ENCODE measurements at regions of chr9 and their contacts with region 1.

Region 1: GRCh38 chr9:97237951-97238851 is 69.3 kb upstream of the CCDC180 start:
- DNase-seq: peak; percentile 69 to 81 (median 77)
- H3K4me3 ChIP-seq: peak overlapping the region; percentile 14 to 85
- H3K4me3 Mint-ChIP-seq: peak overlapping the region; percentile 92 to 98 (median 97)
- H3K27ac ChIP-seq: peak overlapping the region; percentile 57
- H3K27ac Mint-ChIP-seq: peak overlapping the region; percentile 86 to 96 (median 95)
- H3K4me1 ChIP-seq: peaks cover 11% of the 10 kb centered on the region
- H3K4me1 Mint-ChIP-seq: peaks cover 17 to 40% (median 23%) of the 10 kb centered on the region in 4 donors
- H3K27me3 ChIP-seq: no peaks in the 10 kb centered on the region
- H3K27me3 Mint-ChIP-seq: no peaks in the 10 kb centered on the region

Region 2: DNA sequence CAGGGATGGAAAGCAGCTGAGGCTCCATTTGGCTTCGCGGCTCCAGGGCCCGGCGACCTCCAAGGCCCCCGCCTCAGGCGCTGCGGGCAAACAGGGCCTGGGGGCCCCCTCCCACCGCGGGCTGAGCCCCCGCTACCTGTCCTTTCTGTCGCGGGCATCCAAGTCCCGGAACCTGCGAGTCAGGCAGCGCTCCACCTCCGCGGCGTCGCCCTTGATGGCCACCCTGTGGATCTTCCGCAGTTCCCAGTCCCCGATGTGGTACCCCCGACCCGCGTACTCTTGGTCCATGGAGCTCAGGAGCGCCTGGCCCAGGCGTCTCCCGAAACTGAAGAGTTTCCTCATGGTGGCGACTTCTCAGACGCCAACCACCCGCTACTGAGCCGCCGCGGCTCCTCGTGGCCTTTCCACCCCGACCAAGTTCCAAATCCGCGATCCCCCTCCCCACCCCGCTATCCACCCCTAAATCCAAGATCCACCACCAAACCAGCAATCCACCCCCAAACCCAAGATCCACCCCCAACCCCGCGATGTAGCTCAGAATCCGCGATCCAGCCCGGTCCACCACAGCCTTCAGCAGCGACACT is 17.2 kb before region 1 on chr9:
- CTCF ChIA-PET with region 1: interaction called, 4 read pairs
- POLR2A ChIA-PET with region 1: interaction called, 14 read pairs
- intact Hi-C with region 1: loop called (anchors 1 kb)
- DNase-seq: peak in 1 of 5 donors; percentile 1
- H3K4me3 ChIP-seq: peak overlapping the region in 1 of 2 donors; percentile 28
- H3K4me3 Mint-ChIP-seq: peak overlapping the region; percentile 77 to 88 (median 84)
- H3K27ac ChIP-seq: no peak overlapping the region
- H3K27ac Mint-ChIP-seq: no peak overlapping the region
- H3K4me1 ChIP-seq: peaks cover 6% of the 10 kb centered on the region
- H3K4me1 Mint-ChIP-seq: peaks cover 4 to 10% (median 5%) of the 10 kb centered on the region in 4 donors
- H3K27me3 ChIP-seq: no peaks in the 10 kb centered on the region
- H3K27me3 Mint-ChIP-seq: peaks cover 22 to 32% of the 10 kb centered on the region in 2 donors

Region 3: DNA sequence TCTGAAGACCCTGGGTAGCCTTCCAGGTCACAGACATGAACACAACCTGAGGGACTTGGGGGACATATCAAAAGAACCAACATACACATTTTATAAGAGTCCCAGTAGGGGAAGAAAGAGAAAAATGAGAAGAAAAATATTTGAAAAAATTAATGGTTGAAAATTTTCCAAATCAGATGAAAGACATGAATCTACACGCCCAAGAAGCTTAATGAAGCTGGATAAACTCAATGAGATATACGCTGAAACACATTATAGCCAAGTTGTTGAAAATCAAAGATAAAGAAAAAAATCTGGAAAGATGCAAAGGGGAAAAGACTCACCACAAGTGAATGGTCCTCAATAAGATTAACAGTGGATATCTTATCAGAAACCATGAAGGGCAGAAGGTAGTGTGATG is 59.7 kb after region 1 on chr9:
- CTCF ChIA-PET with region 1: no interaction called
- POLR2A ChIA-PET with region 1: no interaction called
- intact Hi-C with region 1: no loop called
- DNase-seq: no peak
- H3K4me3 ChIP-seq: no peak overlapping the region
- H3K4me3 Mint-ChIP-seq: no peak overlapping the region
- H3K27ac ChIP-seq: no peak overlapping the region
- H3K27ac Mint-ChIP-seq: no peak overlapping the region
- H3K4me1 ChIP-seq: no peaks in the 10 kb centered on the region
- H3K4me1 Mint-ChIP-seq: no peaks in the 10 kb centered on the region
- H3K27me3 ChIP-seq: no peaks in the 10 kb centered on the region
- H3K27me3 Mint-ChIP-seq: no peaks in the 10 kb centered on the region